Activated CD4-positive, alpha-beta memory T cell treated with anti-CD3 and anti-CD28 coated beads for 36 hours (primary cell): ENCODE measurements at regions of chr22 and their contacts with region 1.

Region 1: GRCh38 chr22:32644252-32645100 is 157.0 kb upstream of the TIMP3 start:
- DNase-seq: peak; percentile 37
- H3K4me3 Mint-ChIP-seq: no peak overlapping the region
- H3K27ac Mint-ChIP-seq: peak overlapping the region; percentile 77
- H3K4me1 Mint-ChIP-seq: peaks cover 25% of the 10 kb centered on the region
- H3K27me3 Mint-ChIP-seq: peaks cover 2% of the 10 kb centered on the region

Region 2: DNA sequence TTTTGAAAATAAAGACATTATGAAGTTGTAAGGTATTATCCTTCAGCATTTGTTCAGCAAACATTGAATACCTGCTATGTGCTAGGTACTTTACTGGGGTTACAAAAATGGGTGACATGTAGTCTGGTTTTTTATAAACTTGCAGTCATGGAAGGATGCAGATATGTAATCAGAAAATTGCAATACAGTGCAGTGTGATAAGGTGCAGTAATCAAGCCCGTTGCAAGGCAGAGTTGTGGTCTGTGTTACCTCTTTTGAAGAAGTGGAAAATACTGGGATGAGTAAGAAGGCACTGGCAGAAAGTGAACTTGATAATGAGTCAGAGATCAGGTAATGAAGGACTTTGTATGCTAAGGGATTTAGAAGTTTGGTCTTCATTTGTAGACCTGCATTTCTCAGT is 161.8 kb before region 1 on chr22:
- CTCF ChIA-PET with region 1: no interaction called
- POLR2A ChIA-PET with region 1: no interaction called
- intact Hi-C with region 1: loop called (anchors 5 kb)
- DNase-seq: peak; percentile 56
- H3K4me3 Mint-ChIP-seq: no peak overlapping the region
- H3K27ac Mint-ChIP-seq: no peak overlapping the region
- H3K4me1 Mint-ChIP-seq: peaks cover 34% of the 10 kb centered on the region
- H3K27me3 Mint-ChIP-seq: no peaks in the 10 kb centered on the region

Region 3: GRCh38 chr22:32631507-32632290 is 12.8 kb before region 1 on chr22:
- CTCF ChIA-PET with region 1: interaction called, 3 read pairs
- POLR2A ChIA-PET with region 1: no interaction called
- intact Hi-C with region 1: loop called (anchors 1 kb)
- DNase-seq: no peak
- H3K4me3 Mint-ChIP-seq: no peak overlapping the region
- H3K27ac Mint-ChIP-seq: no peak overlapping the region
- H3K4me1 Mint-ChIP-seq: peaks cover 10% of the 10 kb centered on the region
- H3K27me3 Mint-ChIP-seq: peaks cover 11% of the 10 kb centered on the region